Activated CD4-positive, alpha-beta T cell treated with anti-CD3 and anti-CD28 coated beads, Interleukin-2, amount 10 ng/mL, durations not matched to agents 24 days and 14 days (primary cell): ENCODE measurements at regions of chr11 and their contacts with region 1.

Region 1: GRCh38 chr11:96389720-96390487 is at the starts of genes CCDC82 and JRKL:
- DNase-seq: peak; percentile 99
- H3K4me3 Mint-ChIP-seq: peak within 1 kb of the TSS; percentile 93
- H3K27ac Mint-ChIP-seq: peak within 1 kb of the TSS; percentile 96
- H3K4me1 Mint-ChIP-seq: peaks cover 52% of the 10 kb centered on the region
- H3K27me3 Mint-ChIP-seq: no peaks in the 10 kb centered on the region
- total RNA-seq, gene CCDC82: 27.6 and 31.8 TPM in 2 replicates
- total RNA-seq, gene JRKL: 9.9 and 11.9 TPM in 2 replicates

Region 2: GRCh38 chr11:95835768-95836488 is 554.0 kb before region 1 on chr11:
- intact Hi-C with region 1: loop called (anchors 1 kb)
- DNase-seq: peak; percentile 87
- H3K4me3 Mint-ChIP-seq: no peak overlapping the region
- H3K27ac Mint-ChIP-seq: no peak overlapping the region
- H3K4me1 Mint-ChIP-seq: no peaks in the 10 kb centered on the region
- H3K27me3 Mint-ChIP-seq: no peaks in the 10 kb centered on the region

Region 3: GRCh38 chr11:96054870-96055705 is 334.8 kb before region 1 on chr11:
- intact Hi-C with region 1: loop called (anchors 2 kb)
- DNase-seq: no peak
- H3K4me3 Mint-ChIP-seq: no peak overlapping the region
- H3K27ac Mint-ChIP-seq: peak overlapping the region; percentile 51
- H3K4me1 Mint-ChIP-seq: peaks cover 35% of the 10 kb centered on the region
- H3K27me3 Mint-ChIP-seq: no peaks in the 10 kb centered on the region

Region 4: DNA sequence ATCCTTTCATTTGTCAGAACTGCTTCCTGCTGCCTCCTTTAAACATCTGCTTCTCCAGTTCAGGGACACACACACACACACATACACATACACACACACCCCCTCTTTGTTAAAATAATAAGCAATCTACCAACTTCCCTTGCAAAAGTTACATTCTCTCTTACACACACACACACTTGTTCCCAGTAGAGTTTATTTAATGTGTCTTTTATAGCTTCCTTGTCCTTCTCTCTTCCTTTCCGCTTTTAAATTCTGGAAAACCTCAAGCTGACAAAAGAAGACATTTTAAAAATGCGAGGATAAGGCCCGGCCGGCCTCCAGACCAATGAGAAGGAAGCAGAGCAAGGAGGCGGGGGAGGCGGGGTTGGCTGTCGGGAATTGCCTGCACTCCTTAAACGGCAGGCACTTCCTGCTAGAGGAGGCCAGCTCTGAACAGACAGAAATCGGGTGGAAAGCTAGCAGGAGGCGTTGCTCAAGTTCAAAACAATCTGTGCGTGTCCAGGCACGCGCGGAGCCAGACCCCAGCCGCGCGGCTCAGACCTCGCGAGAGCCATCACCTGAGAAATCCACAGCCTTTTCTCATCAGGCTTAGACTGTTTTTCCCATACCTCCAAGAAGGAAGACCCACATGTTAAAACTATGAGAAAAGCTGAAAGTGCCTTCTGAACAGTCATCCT is 146.8 kb before region 1 on chr11:
- intact Hi-C with region 1: loop called (anchors 5 kb)
- DNase-seq: peak; percentile 94
- H3K4me3 Mint-ChIP-seq: peak overlapping the region; percentile 86
- H3K27ac Mint-ChIP-seq: peak overlapping the region; percentile 98
- H3K4me1 Mint-ChIP-seq: peaks cover 48% of the 10 kb centered on the region
- H3K27me3 Mint-ChIP-seq: no peaks in the 10 kb centered on the region